Breast epithelium (tissue), 4 donors: ENCODE measurements at regions of chr12 and their contacts with region 1.

Region 1: DNA sequence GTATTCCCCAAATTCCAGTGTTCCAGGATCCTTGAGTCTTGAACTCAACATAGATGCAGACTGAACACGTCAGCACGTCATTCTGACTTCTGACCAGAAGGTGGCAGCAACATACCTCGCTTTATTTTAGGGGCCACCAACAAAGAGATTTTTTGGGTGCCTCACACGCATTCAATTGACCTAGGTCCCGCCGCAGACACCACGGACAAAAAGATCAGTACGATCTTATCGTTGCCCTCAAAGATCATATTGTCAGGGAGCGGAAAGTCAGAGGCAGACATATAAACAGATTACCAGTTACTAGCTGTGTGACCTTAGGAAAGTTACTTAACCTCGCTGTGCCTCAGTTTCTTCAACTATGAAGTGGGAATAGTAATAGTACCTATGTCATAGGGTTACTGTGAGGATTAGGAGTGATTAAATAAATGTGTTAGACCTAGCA is 6.5 kb upstream of the PRPH start:
- DNase-seq: peak in 1 of 2 donors; percentile 49
- H3K4me3 ChIP-seq: no peak overlapping the region
- H3K27ac ChIP-seq: no peak overlapping the region
- H3K4me1 ChIP-seq: no peaks in the 10 kb centered on the region
- H3K27me3 ChIP-seq: no peaks in the 10 kb centered on the region
- CTCF ChIP-seq: peak; percentile 64 to 82 (median 79)
- POLR2A ChIP-seq: no peak

Region 2: GRCh38 chr12:47458270-47458669 is 1830.2 kb before region 1 on chr12:
- intact Hi-C with region 1: no loop called
- DNase-seq: no peak
- H3K4me3 ChIP-seq: no peak overlapping the region
- H3K27ac ChIP-seq: no peak overlapping the region
- H3K4me1 ChIP-seq: no peaks in the 10 kb centered on the region
- H3K27me3 ChIP-seq: no peaks in the 10 kb centered on the region
- CTCF ChIP-seq: no peak
- POLR2A ChIP-seq: no peak

Region 3: GRCh38 chr12:48824112-48824511 is 464.3 kb before region 1 on chr12:
- intact Hi-C with region 1: loop called (anchors 5 kb)
- DNase-seq: no peak
- H3K4me3 ChIP-seq: no peak overlapping the region
- H3K27ac ChIP-seq: no peak overlapping the region
- H3K4me1 ChIP-seq: no peaks in the 10 kb centered on the region
- H3K27me3 ChIP-seq: no peaks in the 10 kb centered on the region
- CTCF ChIP-seq: no peak
- POLR2A ChIP-seq: no peak

Region 4: DNA sequence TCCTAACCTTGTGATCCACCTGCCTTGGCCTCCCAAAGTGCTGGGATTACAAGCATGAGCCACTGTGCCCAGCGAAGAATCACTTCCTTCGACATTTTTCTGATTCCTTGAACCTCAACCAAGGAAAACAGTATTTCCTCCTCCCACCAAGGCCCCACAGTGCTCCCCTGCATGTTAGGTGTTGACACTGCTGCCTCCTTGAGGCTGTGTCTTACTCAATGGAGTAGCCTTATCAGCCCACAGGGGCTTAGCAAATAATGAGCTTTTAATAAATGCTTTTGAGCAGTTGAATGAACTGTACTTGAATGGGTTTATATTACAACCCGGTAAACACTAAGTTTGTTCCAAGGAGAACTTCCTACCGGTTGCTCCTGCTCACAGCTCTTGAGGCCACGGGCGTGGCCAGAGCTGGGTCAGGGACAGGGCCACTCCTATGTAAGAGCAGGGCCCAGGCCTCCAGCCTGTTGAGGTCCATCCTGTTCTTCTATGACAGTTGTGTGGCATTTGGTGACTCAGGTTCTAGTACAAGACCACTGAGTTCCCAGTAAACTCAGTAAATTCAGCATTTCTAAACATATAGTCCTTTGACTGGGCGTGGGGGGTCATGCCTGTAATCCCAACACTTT is 62.8 kb before region 1 on chr12:
- intact Hi-C with region 1: no loop called
- DNase-seq: no peak
- H3K4me3 ChIP-seq: no peak overlapping the region
- H3K27ac ChIP-seq: no peak overlapping the region
- H3K4me1 ChIP-seq: no peaks in the 10 kb centered on the region
- H3K27me3 ChIP-seq: no peaks in the 10 kb centered on the region
- CTCF ChIP-seq: no peak
- POLR2A ChIP-seq: no peak

Region 5: GRCh38 chr12:49274396-49275286 is 13.8 kb before region 1 on chr12:
- intact Hi-C with region 1: no loop called
- DNase-seq: no peak
- H3K4me3 ChIP-seq: no peak overlapping the region
- H3K27ac ChIP-seq: no peak overlapping the region
- H3K4me1 ChIP-seq: no peaks in the 10 kb centered on the region
- H3K27me3 ChIP-seq: no peaks in the 10 kb centered on the region
- CTCF ChIP-seq: no peak
- POLR2A ChIP-seq: no peak

Region 6: DNA sequence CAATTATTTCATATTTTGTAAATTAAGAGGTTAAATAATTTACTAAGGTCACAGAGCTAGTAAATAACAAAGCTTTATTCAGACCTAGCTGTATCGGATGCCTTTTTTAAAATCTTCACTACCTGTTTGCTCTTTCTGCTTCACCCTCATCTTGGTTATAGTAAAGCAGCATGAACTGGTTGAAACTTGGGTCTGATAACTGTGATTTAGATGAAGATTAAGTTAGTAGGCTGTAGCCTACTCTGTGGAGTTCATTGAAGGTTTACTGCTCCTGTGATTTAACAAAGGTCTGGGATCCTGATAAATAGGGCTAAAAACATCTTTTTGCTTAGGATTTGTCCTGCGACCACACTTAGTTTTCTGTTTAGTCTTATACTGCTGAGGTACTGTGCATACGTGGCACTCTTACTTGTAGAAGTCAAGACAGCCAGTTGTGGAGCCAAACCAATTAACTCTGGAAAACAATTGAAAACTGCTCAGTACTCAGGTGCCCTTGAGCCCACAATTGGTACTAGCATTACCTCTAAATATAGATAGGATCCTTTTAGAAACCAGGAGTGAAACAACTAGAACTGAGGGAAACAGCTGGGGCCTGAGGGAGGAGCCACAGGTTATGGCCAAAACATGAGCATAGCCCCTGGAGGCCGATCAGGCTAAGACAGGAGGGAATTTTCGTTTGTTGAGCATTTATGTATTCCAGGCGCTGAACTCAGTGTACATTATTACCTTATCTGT is 81.1 kb after region 1 on chr12:
- intact Hi-C with region 1: no loop called
- DNase-seq: no peak
- H3K4me3 ChIP-seq: no peak overlapping the region
- H3K27ac ChIP-seq: no peak overlapping the region
- H3K4me1 ChIP-seq: no peaks in the 10 kb centered on the region
- H3K27me3 ChIP-seq: no peaks in the 10 kb centered on the region
- CTCF ChIP-seq: peak; percentile 11 to 28 (median 16)
- POLR2A ChIP-seq: no peak